ENCODE measurements at regions of chr2 and their contacts with region 1.

Region 1: GRCh38 chr2:208175069-208175839 is 11.9 kb upstream of the CRYGA start:
- DNase-seq: peak; percentile 42 to 51 (median 45)
- H3K4me3 ChIP-seq: no peak overlapping the region
- H3K4me3 Mint-ChIP-seq: no peak overlapping the region
- H3K27ac ChIP-seq: no peak overlapping the region
- H3K27ac Mint-ChIP-seq: no peak overlapping the region
- H3K4me1 ChIP-seq: no peaks in the 10 kb centered on the region
- H3K4me1 Mint-ChIP-seq: peaks cover 3 to 5% (median 4%) of the 10 kb centered on the region in 4 donors
- H3K27me3 ChIP-seq: no peaks in the 10 kb centered on the region
- H3K27me3 Mint-ChIP-seq: peaks cover 9 to 19% of the 10 kb centered on the region in 2 donors

Region 2: GRCh38 chr2:207902821-207903220 is 272.4 kb before region 1 on chr2:
- CTCF ChIA-PET with region 1: no interaction called
- POLR2A ChIA-PET with region 1: no interaction called
- intact Hi-C with region 1: no loop called
- DNase-seq: no peak
- H3K4me3 ChIP-seq: no peak overlapping the region
- H3K4me3 Mint-ChIP-seq: no peak overlapping the region
- H3K27ac ChIP-seq: no peak overlapping the region
- H3K27ac Mint-ChIP-seq: no peak overlapping the region
- H3K4me1 ChIP-seq: no peaks in the 10 kb centered on the region
- H3K4me1 Mint-ChIP-seq: peaks cover 0 to 2% (median 0%) of the 10 kb centered on the region in 4 donors
- H3K27me3 ChIP-seq: no peaks in the 10 kb centered on the region
- H3K27me3 Mint-ChIP-seq: no peaks in the 10 kb centered on the region

Region 3: DNA sequence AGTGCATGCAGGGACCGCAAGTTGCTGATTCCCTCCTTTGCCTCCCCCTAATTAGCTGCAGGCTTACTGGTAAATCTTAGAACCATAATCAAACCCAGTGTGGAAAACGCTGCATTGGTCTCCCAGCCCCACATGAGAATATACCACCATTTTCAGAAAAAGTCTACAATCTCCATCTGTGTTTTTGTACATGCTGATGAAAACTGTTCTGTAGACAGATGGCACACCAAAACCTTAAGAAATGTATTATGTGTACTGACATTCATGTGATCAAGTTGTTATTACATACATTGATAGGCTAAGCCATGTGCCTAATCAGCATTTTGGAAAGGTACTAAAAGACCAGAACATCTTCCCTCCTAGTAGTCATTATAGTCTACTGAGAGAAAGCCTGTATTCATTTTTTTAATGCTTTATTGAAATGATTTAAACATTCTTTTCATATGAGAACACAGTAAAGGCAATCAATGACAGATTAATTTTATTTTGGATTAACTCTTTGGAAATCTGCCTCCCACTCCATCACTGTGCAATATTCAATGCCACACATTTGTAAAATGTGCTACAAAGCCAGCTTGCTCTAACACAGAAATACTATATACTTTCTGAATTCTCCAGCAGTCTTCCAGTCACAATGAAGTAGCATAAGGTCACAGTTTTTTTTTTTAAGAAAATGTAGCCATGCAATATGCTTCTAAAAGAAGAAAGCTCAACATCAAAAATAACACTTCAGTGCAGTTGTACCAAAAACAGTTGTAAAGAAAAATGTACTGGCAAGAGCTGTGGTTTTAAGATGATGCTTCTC is 10.1 kb before region 1 on chr2:
- CTCF ChIA-PET with region 1: interaction called, 24 read pairs
- POLR2A ChIA-PET with region 1: no interaction called
- intact Hi-C with region 1: no loop called
- DNase-seq: no peak
- H3K4me3 ChIP-seq: no peak overlapping the region
- H3K4me3 Mint-ChIP-seq: no peak overlapping the region
- H3K27ac ChIP-seq: no peak overlapping the region
- H3K27ac Mint-ChIP-seq: no peak overlapping the region
- H3K4me1 ChIP-seq: no peaks in the 10 kb centered on the region
- H3K4me1 Mint-ChIP-seq: no peaks in the 10 kb centered on the region
- H3K27me3 ChIP-seq: no peaks in the 10 kb centered on the region
- H3K27me3 Mint-ChIP-seq: peaks cover 14 to 18% of the 10 kb centered on the region in 2 donors

Region 4: GRCh38 chr2:208254871-208255556 is 79.8 kb after region 1 on chr2 and contains the start of gene IDH1:
- CTCF ChIA-PET with region 1: interaction called, 49 read pairs
- POLR2A ChIA-PET with region 1: interaction called, 4 read pairs
- intact Hi-C with region 1: loop called (anchors 1 kb)
- DNase-seq: peak; percentile 85 to 92 (median 88)
- H3K4me3 ChIP-seq: peak within 1 kb of the TSS; percentile 91 to 92
- H3K4me3 Mint-ChIP-seq: peak within 1 kb of the TSS; percentile 93 to 100 (median 98)
- H3K27ac ChIP-seq: peak within 1 kb of the TSS; percentile 43
- H3K27ac Mint-ChIP-seq: peak within 1 kb of the TSS; percentile 79 to 94 (median 86)
- H3K4me1 ChIP-seq: peaks cover 14% of the 10 kb centered on the region
- H3K4me1 Mint-ChIP-seq: peaks cover 12 to 32% (median 18%) of the 10 kb centered on the region in 4 donors
- H3K27me3 ChIP-seq: no peaks in the 10 kb centered on the region
- H3K27me3 Mint-ChIP-seq: no peaks in the 10 kb centered on the region
- total RNA-seq, gene IDH1: 25.6 to 25.9 TPM

Region 5: GRCh38 chr2:208315081-208315788 is 140.0 kb after region 1 on chr2:
- CTCF ChIA-PET with region 1: no interaction called
- POLR2A ChIA-PET with region 1: no interaction called
- intact Hi-C with region 1: loop called (anchors 10 kb)
- DNase-seq: no peak
- H3K4me3 ChIP-seq: no peak overlapping the region
- H3K4me3 Mint-ChIP-seq: no peak overlapping the region
- H3K27ac ChIP-seq: no peak overlapping the region
- H3K27ac Mint-ChIP-seq: no peak overlapping the region
- H3K4me1 ChIP-seq: no peaks in the 10 kb centered on the region
- H3K4me1 Mint-ChIP-seq: peaks cover 8 to 15% (median 14%) of the 10 kb centered on the region in 4 donors
- H3K27me3 ChIP-seq: no peaks in the 10 kb centered on the region
- H3K27me3 Mint-ChIP-seq: no peaks in the 10 kb centered on the region

Measured in CD4-positive, alpha-beta memory T cell (primary cell).